ENCODE measurements at regions of chr12 and their contacts with region 1.

Region 1: GRCh38 chr12:107093417-107094182 is at the start of gene CRY1:
- DNase-seq: peak; percentile 98
- H3K4me3 Mint-ChIP-seq: no peak within 1 kb of the TSS
- H3K27ac Mint-ChIP-seq: no peak within 1 kb of the TSS
- H3K4me1 Mint-ChIP-seq: peaks cover 4% of the 10 kb centered on the region
- H3K27me3 Mint-ChIP-seq: peaks cover 12% of the 10 kb centered on the region
- total RNA-seq, gene CRY1: 23.8 and 26.0 TPM in 2 replicates

Region 2: DNA sequence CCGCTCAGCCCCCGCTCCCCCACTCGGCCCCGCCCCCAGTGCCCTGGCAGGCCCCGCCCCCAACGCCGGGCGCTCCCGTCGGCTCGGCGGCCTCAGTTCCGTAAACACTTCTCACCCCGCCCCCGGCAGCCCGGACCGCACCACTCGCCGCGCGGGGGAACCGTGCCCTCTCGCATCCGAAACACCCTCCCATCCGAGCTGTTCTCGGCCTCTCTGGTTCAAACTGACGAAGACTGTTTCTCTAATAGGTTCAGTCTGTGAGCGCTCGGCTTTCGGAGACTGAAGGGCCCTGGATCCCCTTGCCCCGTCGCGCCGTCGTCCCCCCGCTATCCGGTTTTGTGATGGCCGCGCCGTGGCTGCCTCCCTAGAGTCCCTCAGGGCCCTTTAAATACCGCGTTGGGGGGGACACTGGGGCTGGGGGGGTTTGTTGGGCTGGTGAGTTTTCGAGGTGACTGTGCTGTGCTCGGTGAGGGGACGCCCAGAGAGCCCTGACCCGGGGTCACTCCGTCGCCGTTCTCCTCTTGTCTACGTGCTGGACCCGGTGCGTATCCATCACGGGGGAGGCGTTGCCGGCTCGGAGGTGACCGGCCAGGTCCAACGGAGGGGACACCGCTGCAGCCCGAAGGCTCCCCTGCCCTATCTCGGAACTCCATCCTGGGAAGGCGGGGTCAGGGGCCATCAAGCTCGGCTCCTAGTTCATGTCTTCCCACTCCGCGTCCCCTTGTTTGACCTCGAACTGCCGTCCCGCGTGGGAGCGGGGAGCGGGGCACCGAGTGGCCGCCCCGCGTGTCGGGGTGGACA is 791.0 kb before region 1 on chr12 and contains the start of gene TCP11L2:
- intact Hi-C with region 1: loop called (anchors 2 kb)
- DNase-seq: peak; percentile 97
- H3K4me3 Mint-ChIP-seq: peak within 1 kb of the TSS; percentile 97
- H3K27ac Mint-ChIP-seq: peak within 1 kb of the TSS; percentile 100
- H3K4me1 Mint-ChIP-seq: peaks cover 38% of the 10 kb centered on the region
- H3K27me3 Mint-ChIP-seq: no peaks in the 10 kb centered on the region
- total RNA-seq, gene TCP11L2: 3.2 and 4.5 TPM in 2 replicates

Region 3: GRCh38 chr12:106774005-106774807 is 319.4 kb before region 1 on chr12 and contains the start of gene RIC8B:
- intact Hi-C with region 1: loop called (anchors 2 kb)
- DNase-seq: peak; percentile 95
- H3K4me3 Mint-ChIP-seq: peak within 1 kb of the TSS; percentile 98
- H3K27ac Mint-ChIP-seq: peak within 1 kb of the TSS; percentile 96
- H3K4me1 Mint-ChIP-seq: peaks cover 32% of the 10 kb centered on the region
- H3K27me3 Mint-ChIP-seq: peaks cover 2% of the 10 kb centered on the region
- total RNA-seq, gene RIC8B: 13.6 and 14.9 TPM in 2 replicates

Region 4: DNA sequence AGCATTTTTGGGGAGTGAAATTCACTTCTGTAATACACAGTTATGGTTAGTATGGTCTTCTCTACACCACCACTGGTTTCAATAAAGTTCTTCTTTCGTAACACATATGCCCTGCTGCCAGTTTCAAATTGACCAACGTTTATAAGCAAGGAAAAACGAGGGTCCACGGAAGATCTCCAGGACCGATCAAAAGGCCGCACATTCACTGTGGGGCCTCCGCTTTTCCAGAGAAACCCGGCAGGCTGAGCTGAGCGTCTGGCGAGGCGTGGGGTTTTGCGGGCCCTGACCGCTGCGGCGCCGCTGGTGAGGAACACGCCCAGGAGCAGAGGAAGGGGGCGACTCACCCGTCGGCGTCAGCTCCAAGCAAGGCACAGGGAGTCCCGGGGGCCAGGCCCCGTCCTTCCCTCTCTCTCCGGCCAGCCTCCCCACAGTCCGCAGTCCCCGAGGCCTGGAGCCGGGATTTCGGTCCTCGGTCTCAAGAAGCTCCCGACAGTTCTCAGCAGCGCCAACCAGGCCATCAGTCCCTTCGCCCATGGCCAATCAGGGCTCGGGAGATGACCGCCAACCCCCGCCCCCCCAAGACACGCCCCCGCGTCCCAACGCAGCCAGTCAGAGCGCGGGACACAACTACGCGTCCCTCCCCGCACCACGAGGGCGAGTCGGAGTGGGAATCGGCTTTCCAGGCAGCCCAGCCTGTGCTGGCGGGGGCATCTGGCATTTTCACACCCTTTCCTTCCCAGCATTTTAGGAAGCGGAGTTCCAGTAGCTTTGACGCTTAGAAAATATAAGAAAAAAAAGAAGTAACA is 106.8 kb before region 1 on chr12 and contains the start of gene MTERF2:
- intact Hi-C with region 1: loop called (anchors 1 kb)
- DNase-seq: peak; percentile 93
- H3K4me3 Mint-ChIP-seq: peak within 1 kb of the TSS; percentile 93
- H3K27ac Mint-ChIP-seq: peak within 1 kb of the TSS; percentile 81
- H3K4me1 Mint-ChIP-seq: peaks cover 32% of the 10 kb centered on the region
- H3K27me3 Mint-ChIP-seq: no peaks in the 10 kb centered on the region
- total RNA-seq, gene MTERF2: 3.1 and 4.3 TPM in 2 replicates

Region 5: GRCh38 chr12:107372229-107372658 is 278.6 kb after region 1 on chr12:
- intact Hi-C with region 1: loop called (anchors 1 kb)
- DNase-seq: peak; percentile 87
- H3K4me3 Mint-ChIP-seq: peak overlapping the region; percentile 69
- H3K27ac Mint-ChIP-seq: peak overlapping the region; percentile 86
- H3K4me1 Mint-ChIP-seq: peaks cover 72% of the 10 kb centered on the region
- H3K27me3 Mint-ChIP-seq: no peaks in the 10 kb centered on the region

Region 6: DNA sequence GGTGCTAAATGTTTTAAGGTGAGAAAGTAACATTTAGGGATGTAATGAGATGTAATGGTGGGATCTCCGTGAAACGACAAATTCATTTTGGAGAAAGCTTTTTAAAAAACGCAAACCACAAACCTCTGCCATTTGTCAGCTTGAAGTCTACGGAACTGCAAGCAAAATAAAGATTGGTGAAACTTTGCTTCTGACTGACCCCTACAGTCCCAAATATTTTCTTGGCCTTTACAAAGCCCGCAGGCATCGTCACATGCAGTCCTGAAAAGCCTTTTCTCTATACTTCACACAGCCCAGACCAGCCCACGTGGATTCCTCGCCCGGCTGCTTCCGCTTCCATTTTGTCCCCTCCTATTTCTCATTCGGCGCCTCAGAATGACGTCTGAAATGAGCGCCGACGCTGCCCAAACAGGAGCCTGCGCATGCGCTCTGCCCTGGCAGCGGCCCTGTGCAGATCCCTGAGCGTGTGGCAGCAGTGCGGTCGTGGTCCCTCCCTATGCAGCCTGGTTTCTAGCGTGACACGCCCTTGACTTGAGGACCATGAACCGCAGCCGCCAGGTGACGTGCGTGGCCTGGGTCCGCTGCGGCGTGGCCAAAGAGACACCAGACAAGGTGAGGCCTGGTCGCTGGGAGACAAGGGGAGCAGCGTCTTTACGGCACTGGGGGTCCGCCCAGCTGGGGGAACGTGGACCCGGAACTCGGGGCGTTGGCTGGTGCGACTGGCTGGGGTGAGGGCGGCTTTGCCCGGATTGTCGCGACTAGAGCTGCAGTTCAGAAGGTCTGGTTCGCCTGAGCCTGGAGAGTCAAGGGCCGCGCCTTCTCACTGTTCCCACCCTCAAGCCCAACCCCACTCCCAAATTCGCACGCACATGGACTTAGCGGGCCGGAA is 592.0 kb after region 1 on chr12 and contains the start of gene PWP1:
- intact Hi-C with region 1: loop called (anchors 1 kb)
- DNase-seq: peak; percentile 99
- H3K4me3 Mint-ChIP-seq: peak within 1 kb of the TSS; percentile 93
- H3K27ac Mint-ChIP-seq: peak within 1 kb of the TSS; percentile 92
- H3K4me1 Mint-ChIP-seq: peaks cover 26% of the 10 kb centered on the region
- H3K27me3 Mint-ChIP-seq: peaks cover 2% of the 10 kb centered on the region
- total RNA-seq, gene PWP1: 56.3 and 63.2 TPM in 2 replicates

Measured in activated CD4-positive, alpha-beta T cell treated with anti-CD3 and anti-CD28 coated beads, Interleukin-2, amount 10 ng/mL, durations not matched to agents 24 days and 14 days (primary cell).